CD8-positive, alpha-beta T cell (primary cell): ENCODE measurements at regions of chr19 and their contacts with region 1.

Region 1: DNA sequence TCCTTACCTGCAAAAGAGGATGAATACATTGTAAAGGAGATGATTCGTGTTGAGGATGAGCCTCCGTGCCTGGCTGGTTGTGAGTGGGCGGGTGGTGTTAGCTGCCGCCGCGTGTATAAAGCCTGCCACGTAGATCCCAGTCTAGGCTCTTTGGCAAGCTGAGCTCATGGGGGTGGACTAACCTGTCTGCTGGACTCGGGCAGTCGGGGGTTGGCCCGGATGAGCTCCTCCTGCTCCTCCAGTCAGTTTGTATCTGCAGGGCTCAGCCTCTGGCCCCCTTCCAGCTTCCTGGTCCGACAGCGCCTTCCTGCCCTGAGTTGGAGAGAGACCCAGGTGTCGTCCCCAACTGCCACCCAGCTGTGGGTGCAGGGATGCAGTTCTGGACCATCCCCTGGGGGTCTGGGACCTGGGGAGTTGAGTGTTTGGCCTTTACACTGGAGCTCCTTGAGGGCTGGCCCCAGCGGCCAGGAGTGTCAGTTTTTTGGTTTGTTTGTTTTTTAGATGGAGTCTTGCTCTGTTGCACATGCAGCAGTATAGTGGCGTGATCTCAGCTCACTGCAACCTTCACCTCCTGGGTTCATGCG is 20.9 kb downstream of the TECR start:
- DNase-seq: no peak
- ATAC-seq: no peak
- H3K4me3 ChIP-seq: no peak overlapping the region
- H3K4me3 Mint-ChIP-seq: no peak overlapping the region
- H3K27ac ChIP-seq: peak overlapping the region; percentile 14 to 15
- H3K27ac Mint-ChIP-seq: peak overlapping the region; percentile 79
- H3K4me1 ChIP-seq: peaks cover 41% of the 10 kb centered on the region
- H3K4me1 Mint-ChIP-seq: peaks cover 49% of the 10 kb centered on the region
- H3K27me3 ChIP-seq: no peaks in the 10 kb centered on the region
- H3K27me3 Mint-ChIP-seq: no peaks in the 10 kb centered on the region
- CTCF ChIP-seq: no peak

Region 2: GRCh38 chr19:14505488-14506432 is 44.5 kb before region 1 on chr19:
- CTCF ChIA-PET with region 1: interaction called, 49 read pairs
- POLR2A ChIA-PET with region 1: interaction called, 11 read pairs
- intact Hi-C with region 1: loop called (anchors 1 kb)
- DNase-seq: peak; percentile 50 to 87 (median 76)
- ATAC-seq: peak; percentile 51
- H3K4me3 ChIP-seq: peak overlapping the region in 1 of 2 experiments; percentile 25
- H3K4me3 Mint-ChIP-seq: peak overlapping the region; percentile 56
- H3K27ac ChIP-seq: peak overlapping the region; percentile 62 to 76
- H3K27ac Mint-ChIP-seq: peak overlapping the region; percentile 96
- H3K4me1 ChIP-seq: peaks cover 49% of the 10 kb centered on the region
- H3K4me1 Mint-ChIP-seq: peaks cover 64% of the 10 kb centered on the region
- H3K27me3 ChIP-seq: no peaks in the 10 kb centered on the region
- H3K27me3 Mint-ChIP-seq: no peaks in the 10 kb centered on the region
- CTCF ChIP-seq: peak; percentile 82

Region 3: DNA sequence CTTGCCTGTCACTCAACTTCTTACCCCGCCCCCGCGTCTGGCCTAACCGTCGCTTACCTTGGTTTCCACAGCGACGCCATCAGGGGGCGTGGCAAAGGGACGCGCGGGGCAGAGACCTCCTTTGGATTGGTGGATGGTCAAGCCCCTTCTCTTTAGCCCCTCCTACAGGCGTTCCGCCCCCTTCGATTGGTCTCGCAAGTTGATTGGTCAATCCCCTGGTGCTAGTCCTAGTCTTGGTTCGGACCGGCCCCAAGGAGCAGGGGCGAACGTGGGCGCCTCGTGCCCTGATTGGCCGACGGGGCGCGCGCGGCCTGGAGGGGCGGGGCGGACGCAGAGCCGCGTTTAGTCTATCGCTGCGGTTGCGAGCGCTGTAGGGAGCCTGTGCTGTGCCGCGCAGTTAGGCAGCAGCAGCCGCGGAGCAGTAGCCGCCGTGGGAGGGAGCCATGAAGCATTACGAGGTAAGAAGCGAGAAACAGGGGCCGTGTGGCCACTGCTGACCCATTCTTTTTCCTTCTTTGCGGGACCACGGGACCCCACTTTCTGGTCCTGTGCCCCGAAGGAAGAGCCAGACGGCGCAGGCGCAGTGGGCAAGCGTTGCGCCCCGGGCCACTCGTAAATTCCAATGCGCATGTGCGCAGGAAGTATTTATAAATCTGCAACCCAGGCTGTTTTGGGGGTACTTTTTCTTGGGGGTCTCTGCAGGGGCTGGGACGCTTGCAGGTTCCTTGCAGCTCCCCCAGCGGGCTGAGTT is 20.9 kb before region 1 on chr19 and contains the start of gene TECR:
- CTCF ChIA-PET with region 1: interaction called, 22 read pairs
- POLR2A ChIA-PET with region 1: interaction called, 4 read pairs
- intact Hi-C with region 1: loop called (anchors 1 kb)
- DNase-seq: peak; percentile 100
- ATAC-seq: peak; percentile 93
- H3K4me3 ChIP-seq: peak within 1 kb of the TSS; percentile 85 to 97
- H3K4me3 Mint-ChIP-seq: peak within 1 kb of the TSS; percentile 97
- H3K27ac ChIP-seq: peak within 1 kb of the TSS; percentile 88 to 89
- H3K27ac Mint-ChIP-seq: peak within 1 kb of the TSS; percentile 98
- H3K4me1 ChIP-seq: peaks cover 28% of the 10 kb centered on the region
- H3K4me1 Mint-ChIP-seq: peaks cover 54% of the 10 kb centered on the region
- H3K27me3 ChIP-seq: no peaks in the 10 kb centered on the region
- H3K27me3 Mint-ChIP-seq: no peaks in the 10 kb centered on the region
- CTCF ChIP-seq: no peak
- total RNA-seq, gene TECR: 300 to 325 TPM

Region 4: GRCh38 chr19:14536926-14537692 is 13.2 kb before region 1 on chr19:
- CTCF ChIA-PET with region 1: interaction called, 22 read pairs
- POLR2A ChIA-PET with region 1: no interaction called
- intact Hi-C with region 1: no loop called
- DNase-seq: peak in 4 of 9 experiments; percentile 49 to 67 (median 56)
- ATAC-seq: peak; percentile 80
- H3K4me3 ChIP-seq: no peak overlapping the region
- H3K4me3 Mint-ChIP-seq: no peak overlapping the region
- H3K27ac ChIP-seq: no peak overlapping the region
- H3K27ac Mint-ChIP-seq: no peak overlapping the region
- H3K4me1 ChIP-seq: peaks cover 20% of the 10 kb centered on the region
- H3K4me1 Mint-ChIP-seq: peaks cover 46% of the 10 kb centered on the region
- H3K27me3 ChIP-seq: no peaks in the 10 kb centered on the region
- H3K27me3 Mint-ChIP-seq: no peaks in the 10 kb centered on the region
- CTCF ChIP-seq: no peak

Region 5: DNA sequence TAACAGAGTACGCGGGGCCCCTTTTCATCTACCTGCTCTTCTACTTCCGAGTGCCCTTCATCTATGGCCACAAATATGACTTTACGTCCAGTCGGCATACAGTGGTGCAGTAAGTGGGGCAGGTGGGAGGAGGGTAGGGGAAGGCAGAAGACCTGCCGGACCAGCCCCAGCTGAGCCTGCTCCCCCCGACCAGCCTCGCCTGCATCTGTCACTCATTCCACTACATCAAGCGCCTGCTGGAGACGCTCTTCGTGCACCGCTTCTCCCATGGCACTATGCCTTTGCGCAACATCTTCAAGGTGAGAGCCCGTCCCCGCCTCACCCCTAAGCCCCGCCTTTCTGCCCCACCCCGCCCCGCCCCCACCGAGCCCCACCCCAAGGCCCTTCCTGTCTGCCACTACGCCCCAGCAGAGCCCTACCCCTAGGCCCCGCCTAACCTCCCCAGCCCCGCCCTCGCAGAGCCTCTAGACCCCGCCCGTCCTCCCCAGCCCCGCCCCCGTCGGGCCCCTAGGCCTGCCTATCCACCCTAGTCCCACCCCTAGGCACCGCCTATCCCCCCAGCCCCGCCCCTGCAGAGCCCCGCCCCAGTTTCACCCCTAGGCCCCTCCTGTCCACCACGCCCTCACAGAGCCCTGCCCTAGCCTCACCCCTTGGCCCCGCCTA is 13.8 kb after region 1 on chr19:
- CTCF ChIA-PET with region 1: interaction called, 14 read pairs
- POLR2A ChIA-PET with region 1: interaction called, 3 read pairs
- intact Hi-C with region 1: no loop called
- DNase-seq: peak in 5 of 9 experiments; percentile 32 to 70 (median 64)
- ATAC-seq: peak; percentile 81
- H3K4me3 ChIP-seq: no peak overlapping the region
- H3K4me3 Mint-ChIP-seq: no peak overlapping the region
- H3K27ac ChIP-seq: peak overlapping the region in 1 of 2 experiments; percentile 72
- H3K27ac Mint-ChIP-seq: no peak overlapping the region
- H3K4me1 ChIP-seq: peaks cover 24% of the 10 kb centered on the region
- H3K4me1 Mint-ChIP-seq: peaks cover 32% of the 10 kb centered on the region
- H3K27me3 ChIP-seq: no peaks in the 10 kb centered on the region
- H3K27me3 Mint-ChIP-seq: no peaks in the 10 kb centered on the region
- CTCF ChIP-seq: no peak

Region 6: DNA sequence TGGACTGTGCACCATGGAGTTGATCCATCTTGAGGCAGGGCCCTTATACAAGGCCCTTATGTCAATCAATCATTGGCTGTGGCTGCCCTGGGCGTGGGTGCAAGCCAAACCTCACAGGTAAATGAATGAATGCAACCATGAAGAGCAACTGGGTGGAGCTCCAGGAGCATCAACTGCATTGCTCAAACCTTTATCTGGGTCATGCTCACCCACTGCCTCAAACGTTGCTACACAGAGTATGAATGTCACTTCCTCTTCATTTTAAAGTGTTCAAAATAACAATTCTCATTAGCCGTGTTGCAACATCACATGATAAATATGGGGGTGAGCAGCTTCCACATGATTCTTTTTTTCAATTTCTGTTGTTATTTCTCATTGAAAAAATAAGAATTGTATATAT is 133.1 kb after region 1 on chr19:
- CTCF ChIA-PET with region 1: no interaction called
- POLR2A ChIA-PET with region 1: no interaction called
- intact Hi-C with region 1: no loop called
- DNase-seq: peak in 1 of 9 experiments; percentile 33
- ATAC-seq: peak; percentile 65
- H3K4me3 ChIP-seq: no peak overlapping the region
- H3K4me3 Mint-ChIP-seq: no peak overlapping the region
- H3K27ac ChIP-seq: no peak overlapping the region
- H3K27ac Mint-ChIP-seq: no peak overlapping the region
- H3K4me1 ChIP-seq: no peaks in the 10 kb centered on the region
- H3K4me1 Mint-ChIP-seq: peaks cover 1% of the 10 kb centered on the region
- H3K27me3 ChIP-seq: no peaks in the 10 kb centered on the region
- H3K27me3 Mint-ChIP-seq: peaks cover 6% of the 10 kb centered on the region
- CTCF ChIP-seq: no peak